ENCODE measurements at regions of chr7 and their contacts with region 1.

Region 1: DNA sequence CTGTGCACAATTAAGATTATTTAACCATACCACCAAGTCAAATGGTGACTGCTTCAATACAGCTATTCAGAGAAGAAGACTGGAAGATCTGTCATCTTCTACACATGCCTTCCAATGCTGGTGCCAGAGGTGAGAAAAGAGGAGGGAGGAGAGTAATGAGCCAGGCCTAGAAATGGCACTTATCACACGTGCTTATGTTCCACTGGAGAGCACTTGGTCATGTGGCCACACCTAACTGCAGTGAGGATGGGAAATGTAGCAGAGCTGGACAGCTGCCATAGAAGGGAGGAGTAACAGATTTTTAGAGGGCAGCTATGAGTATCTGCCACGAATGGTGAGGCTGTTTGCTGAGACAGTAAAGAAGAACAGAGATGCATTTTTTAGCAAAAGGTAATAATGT is 77.1 kb downstream of the MPLKIP start:
- DNase-seq: no peak
- ATAC-seq: no peak
- H3K4me3 ChIP-seq: no peak overlapping the region
- H3K27ac ChIP-seq: no peak overlapping the region
- H3K4me1 ChIP-seq: peaks cover 16% of the 10 kb centered on the region; the same call in 2 of the 3 replicates
- CTCF ChIP-seq: no peak
- EP300 ChIP-seq: no peak
- POLR2A ChIP-seq: no peak
- RAD21 ChIP-seq: no peak

Region 2: GRCh38 chr7:39894904-39895303 is 162.4 kb before region 1 on chr7:
- CTCF ChIA-PET with region 1: interaction called, 107 read pairs
- POLR2A ChIA-PET with region 1: no interaction called
- DNase-seq: no peak
- ATAC-seq: peak in 1 of 2 experiments; percentile 33; a peak in 2 of 6 replicates
- H3K4me3 ChIP-seq: no peak overlapping the region
- H3K27ac ChIP-seq: no peak overlapping the region
- H3K4me1 ChIP-seq: peaks cover 3% of the 10 kb centered on the region; the same call in 1 of the 3 replicates
- CTCF ChIP-seq: no peak
- EP300 ChIP-seq: no peak
- POLR2A ChIP-seq: no peak
- RAD21 ChIP-seq: no peak

Region 3: GRCh38 chr7:39948956-39949928 is 108.0 kb before region 1 on chr7:
- CTCF ChIA-PET with region 1: interaction called, 24 read pairs
- POLR2A ChIA-PET with region 1: interaction called, 9 read pairs
- DNase-seq: peak; percentile 96 to 99
- ATAC-seq: peak; percentile 85 to 91
- H3K4me3 ChIP-seq: peak overlapping the region; percentile 84
- H3K27ac ChIP-seq: peak overlapping the region; percentile 99 to 100
- H3K4me1 ChIP-seq: peaks cover 18% of the 10 kb centered on the region
- CTCF ChIP-seq: no peak
- EP300 ChIP-seq: no peak
- POLR2A ChIP-seq: peak; percentile 96
- RAD21 ChIP-seq: peak in 1 of 2 experiments; percentile 24; a peak in 1 of 5 replicates

Region 4: DNA sequence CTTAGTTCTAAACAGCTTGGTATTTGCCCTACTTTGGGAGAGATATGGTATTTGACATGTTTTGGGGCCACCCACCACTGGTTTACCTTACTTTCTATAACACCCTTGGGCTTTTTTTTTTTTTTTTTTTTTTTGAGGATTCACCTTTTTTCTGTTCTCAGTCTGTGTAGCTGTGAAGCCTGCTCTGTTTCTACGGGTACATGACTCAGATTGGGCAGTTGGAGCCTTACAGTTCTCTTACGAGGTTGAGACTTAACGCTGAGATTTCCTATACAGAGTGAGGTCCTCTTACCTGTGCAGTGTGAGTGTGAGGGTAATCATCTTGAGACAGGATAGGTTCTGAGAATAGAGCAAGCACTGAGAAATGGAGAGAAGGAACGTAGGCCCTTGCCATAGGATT is 29.7 kb before region 1 on chr7:
- CTCF ChIA-PET with region 1: interaction called, 13 read pairs
- POLR2A ChIA-PET with region 1: no interaction called
- DNase-seq: no peak
- ATAC-seq: no peak
- H3K4me3 ChIP-seq: no peak overlapping the region
- H3K27ac ChIP-seq: no peak overlapping the region
- H3K4me1 ChIP-seq: no peaks in the 10 kb centered on the region
- CTCF ChIP-seq: no peak
- EP300 ChIP-seq: no peak
- POLR2A ChIP-seq: no peak
- RAD21 ChIP-seq: no peak

Region 5: DNA sequence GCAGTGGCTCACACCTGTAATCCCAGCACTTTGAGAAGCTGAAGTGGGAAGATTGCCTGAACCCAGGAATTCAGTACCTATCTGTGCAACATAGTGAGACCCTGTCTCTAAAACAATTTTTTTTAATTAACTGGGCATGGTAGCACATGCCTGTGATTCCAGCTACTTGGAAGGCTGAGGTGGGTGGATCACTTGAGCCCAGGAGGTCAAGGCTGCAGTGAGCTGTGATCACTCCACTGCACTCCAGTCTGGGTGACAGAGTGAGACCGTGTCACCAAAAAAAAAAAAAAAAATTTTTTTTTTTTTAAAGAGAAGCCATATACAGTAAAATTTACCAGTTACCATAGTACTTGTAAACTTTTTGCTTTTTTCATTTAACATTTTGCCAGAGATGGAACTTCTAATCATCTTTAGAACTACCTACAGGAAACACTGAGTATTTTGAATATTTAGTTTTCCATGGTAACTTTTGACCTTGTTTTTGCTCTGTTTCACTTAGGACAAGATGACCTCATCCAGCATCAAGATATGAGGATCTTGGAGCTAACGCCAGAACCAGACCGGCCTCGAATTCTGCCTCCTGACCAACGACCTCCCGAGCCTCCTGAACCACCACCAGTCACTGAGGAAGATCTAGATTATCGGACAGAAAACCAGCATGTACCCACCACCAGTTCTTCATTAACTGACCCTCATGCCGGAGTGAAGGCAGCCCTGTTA is 36.5 kb after region 1 on chr7:
- CTCF ChIA-PET with region 1: no interaction called
- POLR2A ChIA-PET with region 1: no interaction called
- DNase-seq: no peak
- ATAC-seq: no peak
- H3K4me3 ChIP-seq: no peak overlapping the region
- H3K27ac ChIP-seq: no peak overlapping the region
- H3K4me1 ChIP-seq: no peaks in the 10 kb centered on the region
- CTCF ChIP-seq: no peak
- EP300 ChIP-seq: no peak
- POLR2A ChIP-seq: no peak
- RAD21 ChIP-seq: no peak

Region 6: DNA sequence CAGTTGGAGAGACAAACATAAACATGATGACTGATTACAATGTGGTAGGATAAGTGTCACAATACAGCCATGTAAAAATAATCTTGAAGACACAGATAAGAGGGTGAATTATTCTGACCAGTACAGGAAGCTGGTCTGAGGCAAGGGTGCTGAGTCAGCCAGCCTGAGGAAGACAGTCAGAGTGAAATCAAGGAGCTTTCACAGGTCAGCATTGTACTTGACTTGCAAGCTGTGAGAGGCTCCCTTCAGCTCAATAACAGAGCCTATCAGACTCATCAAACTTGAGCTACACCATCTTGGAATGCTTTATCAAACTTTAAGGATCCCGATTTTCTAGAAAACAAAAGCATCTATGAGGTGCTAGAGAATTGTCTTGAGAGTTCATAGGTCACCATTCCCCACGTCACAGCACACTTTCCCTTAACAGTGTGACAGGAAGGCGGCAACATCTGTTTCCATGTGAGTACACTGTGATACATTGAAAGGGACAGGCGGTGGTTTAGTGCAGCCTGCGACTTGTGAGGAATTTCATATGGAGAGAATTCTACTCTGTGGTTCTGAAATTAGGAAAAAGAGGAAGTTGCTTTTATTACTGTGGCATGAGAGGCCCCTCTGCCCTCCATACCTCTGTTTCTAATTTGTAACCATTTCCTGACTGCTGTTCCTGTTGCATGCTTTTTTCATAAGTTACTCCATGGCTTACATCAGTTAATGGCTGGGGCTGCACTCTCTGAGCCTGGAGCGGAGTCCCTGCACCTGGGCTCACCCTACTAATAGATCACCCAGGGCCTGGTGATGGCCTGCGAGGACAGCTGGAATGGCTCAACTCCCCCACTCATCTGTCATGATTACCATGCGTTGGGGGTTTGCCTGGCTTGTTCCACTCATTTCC is 494.6 kb after region 1 on chr7:
- CTCF ChIA-PET with region 1: no interaction called
- POLR2A ChIA-PET with region 1: no interaction called
- DNase-seq: peak in 1 of 2 experiments; percentile 2
- ATAC-seq: no peak
- H3K4me3 ChIP-seq: no peak overlapping the region
- H3K27ac ChIP-seq: no peak overlapping the region
- H3K4me1 ChIP-seq: no peaks in the 10 kb centered on the region
- CTCF ChIP-seq: no peak
- EP300 ChIP-seq: no peak
- POLR2A ChIP-seq: no peak
- RAD21 ChIP-seq: no peak

Measured in A549 (cell line).